Cardiac septum (tissue), 1 donor: ENCODE measurements at regions of chr16 and their contacts with region 1.

Region 1: DNA sequence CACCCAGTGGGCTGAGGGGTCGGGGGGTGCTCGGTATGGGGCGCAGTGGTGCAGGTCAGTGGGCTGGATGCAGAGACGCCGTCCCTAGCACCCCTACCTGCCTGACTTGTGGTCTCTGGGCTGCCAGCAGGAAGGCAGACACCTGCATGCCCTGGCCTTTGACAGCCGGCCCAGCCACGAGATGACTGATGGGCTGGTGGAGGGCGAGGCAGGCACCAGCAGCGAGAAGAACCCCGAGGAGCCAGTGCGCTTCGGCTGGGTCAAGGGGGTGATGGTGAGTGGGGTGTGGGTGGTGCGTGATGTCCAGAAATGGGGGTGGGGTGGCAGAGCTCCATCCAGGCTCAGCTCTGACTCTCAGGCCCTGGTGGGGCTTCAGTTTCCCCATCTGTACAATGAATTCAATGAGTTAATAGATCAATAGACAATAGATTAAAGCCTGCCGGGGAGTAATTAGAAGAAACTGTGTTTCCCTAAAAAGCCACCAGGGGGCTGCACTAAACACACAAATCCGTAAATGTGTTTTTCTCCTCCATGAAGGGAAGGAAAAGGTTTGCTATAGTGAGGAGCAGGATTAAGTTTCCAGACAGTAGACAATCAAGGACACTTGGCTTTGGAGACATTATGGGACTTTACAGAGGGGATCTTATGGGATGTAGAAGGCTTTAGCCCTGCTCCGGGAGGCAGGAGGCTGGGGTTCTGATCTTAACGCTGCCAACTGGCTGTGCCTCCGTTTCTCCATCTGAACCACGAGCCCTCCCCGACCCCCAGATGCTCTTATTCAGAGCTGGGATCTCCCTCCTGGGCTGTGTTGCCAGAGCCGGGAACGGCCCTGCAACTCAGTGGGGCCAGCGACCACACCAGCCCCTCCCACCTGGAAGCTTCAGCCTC is 2.2 kb downstream of the SLC12A3 start:
- DNase-seq: no peak

Region 2: DNA sequence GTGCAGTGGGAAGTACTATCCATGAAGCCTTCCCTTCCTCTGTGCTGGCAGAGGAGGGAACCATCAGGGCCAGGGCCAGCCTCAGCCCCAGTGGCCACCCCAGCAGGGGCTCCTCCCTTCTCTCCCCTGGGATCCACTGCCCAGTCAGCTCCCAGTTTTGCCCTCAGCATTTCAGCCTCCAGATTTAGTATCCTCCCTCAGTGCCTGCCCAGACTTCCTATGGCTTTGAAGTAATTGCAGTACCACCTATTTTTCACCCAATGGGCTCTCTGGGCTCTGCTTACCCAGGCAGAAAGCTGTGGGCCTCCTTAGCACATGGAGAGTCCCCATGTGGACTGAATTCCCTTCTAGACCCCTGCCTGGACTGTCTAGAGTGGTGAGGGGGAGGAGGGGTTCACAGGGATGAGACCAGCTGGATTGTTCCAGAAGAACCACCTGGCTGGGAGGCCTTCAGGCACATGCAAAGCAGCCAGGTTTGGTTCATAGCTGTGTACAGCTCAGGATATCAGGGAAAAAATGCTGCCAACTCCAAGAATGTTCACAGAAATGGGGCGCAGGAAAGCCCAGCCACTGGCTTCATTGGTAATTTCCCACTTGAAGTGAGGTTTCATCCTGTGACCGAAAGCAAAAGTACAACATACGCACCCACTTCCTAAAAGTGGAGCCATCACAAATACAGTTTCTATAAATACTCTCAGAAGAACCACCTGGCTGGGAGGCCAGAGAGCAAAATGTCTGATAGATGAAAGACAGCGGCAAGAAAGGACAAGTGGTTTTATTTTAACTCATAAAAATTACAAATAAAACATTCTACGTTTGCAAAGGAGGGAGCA is 49.6 kb after region 1 on chr16:
- intact Hi-C with region 1: loop called (anchors 5 kb)
- DNase-seq: no peak

Region 3: GRCh38 chr16:56931892-56932720 is 64.9 kb after region 1 on chr16 and contains the start of gene HERPUD1:
- intact Hi-C with region 1: no loop called
- DNase-seq: peak; percentile 99
- total RNA-seq, gene HERPUD1: 87.4 TPM

Region 4: DNA sequence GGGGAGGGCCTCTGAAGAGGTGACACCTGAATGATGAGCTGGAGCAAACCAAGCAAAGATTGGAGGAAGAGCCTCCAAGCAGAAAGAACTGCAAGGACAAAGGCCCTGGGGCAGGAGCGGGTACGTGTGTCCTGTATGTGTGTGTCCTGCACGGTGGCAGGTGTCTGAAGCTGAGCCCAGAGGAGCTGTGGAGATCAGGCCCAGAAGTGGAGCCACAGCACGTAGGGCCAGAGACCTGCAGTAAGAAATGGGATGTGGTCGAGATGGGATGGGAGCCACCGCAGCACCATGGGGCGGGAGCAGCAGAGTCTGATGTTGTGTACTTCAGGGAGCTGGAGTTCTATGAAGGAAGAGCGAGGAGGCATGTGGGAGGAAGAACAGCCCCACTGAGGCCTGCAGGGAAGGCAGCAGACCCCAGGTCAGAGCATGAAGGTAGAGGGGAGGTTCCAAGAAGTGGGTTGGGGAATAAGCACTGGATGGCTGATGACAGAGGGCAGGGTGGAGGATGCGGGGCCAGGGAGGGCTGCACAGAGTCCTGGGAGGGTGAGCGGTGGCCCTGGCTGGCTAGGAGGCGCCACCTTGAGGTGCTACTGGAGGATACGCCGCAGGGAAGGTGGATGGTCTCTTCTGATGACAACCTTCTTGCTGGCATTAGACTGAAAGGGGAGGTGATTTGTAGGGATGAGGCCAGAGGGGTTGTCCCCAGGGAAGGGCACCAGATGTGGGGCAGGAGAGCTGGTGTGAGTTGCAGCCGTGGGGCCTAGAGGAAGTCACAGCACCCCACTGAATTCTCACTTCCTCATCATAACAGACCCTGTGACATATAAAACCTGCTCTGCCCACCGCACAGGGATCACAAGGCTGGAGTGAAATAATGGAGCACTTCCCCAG is 83.9 kb after region 1 on chr16:
- intact Hi-C with region 1: loop called (anchors 1 kb)
- DNase-seq: no peak

Region 5: DNA sequence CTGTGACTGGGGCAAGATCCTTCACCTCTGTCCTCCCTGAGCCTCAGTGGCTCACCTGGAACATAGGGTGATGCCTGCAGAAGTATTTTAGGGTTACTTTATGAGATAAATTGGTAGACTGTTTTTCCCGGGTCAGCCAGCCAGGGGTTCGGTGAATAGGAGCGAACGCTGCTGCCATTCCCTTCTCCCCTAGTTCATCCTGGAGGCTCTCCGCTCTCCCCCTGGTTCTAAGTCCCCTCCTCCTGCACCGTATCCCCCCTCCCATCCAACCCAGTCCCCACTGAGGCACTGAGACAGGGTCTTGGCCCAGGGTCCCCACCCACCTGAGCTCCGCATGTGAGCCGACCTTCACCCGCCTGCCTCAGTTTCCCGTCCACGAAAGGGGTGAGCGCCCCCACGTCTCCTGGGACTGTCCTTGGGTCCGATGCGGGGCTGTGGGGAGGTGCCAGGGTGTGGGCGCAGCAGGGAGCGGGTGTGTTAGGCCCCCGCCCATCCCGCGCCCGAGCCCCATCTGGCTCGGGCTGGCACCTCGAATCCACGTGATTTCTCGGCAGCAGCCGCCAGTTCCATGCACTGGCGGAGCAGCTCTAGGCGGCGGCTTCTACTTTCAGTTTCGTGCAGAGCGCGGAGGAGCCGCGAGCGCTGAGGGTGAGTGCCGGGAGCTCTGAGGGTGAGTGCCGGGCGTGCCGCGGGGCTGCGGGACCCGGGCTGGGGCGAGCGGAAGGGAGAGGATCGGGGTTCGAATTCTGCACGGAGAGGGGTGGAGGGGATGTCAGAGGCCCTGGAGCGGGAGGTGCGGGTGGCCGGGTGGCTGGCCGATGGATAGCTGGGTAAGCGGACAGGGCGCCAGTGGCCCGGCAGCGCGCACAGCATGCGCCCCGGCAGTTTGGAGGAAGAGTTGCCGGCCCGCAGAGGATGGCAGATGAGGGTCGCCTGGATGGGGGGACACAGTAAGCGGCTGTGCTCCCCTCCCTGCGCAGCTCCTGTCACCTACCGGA is 122.1 kb after region 1 on chr16 and contains the start of gene NLRC5:
- intact Hi-C with region 1: no loop called
- DNase-seq: peak; percentile 95
- total RNA-seq, gene NLRC5: 12.7 TPM

Region 6: DNA sequence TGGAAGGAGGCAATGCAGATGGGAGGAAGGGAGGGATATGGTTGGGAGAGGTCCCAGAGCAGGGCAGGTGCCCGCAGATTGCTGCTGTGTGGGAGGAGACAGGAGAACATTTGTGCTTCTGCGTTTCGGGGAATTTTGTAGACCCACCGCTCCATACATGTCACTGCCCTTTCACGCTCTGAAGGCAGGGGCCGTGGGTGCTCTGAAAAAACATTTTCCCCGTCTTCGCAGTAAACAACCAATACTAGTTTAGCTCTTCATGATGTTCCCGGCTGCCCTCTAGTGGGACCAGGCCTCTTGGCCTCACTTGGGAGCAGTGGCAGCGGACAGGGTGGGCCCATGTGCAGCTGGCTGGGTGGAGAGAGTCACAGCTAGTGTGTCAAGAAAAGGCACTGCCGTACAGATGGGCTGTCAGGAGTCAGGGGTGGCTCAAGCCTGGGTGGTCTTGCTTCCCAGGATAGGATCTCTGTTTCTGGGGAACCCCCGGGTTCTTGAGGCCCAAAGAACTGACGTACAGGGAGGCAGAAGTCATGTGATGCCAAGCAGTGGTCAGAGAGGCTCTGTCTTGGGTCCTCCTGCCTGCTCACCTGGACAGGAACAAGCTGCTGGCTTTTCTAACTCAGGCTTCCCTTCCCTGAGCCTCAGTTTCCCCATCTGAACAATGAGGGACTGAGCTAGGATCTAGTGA is 178.7 kb after region 1 on chr16:
- intact Hi-C with region 1: loop called (anchors 5 kb)
- DNase-seq: peak; percentile 85